Colonic mucosa (tissue), 4 donors: ENCODE measurements at regions of chr2 and their contacts with region 1.

Region 1: GRCh38 chr2:224086226-224086914 is 47.3 kb upstream of the SERPINE2 start:
- DNase-seq: no peak
- H3K4me3 ChIP-seq: no peak overlapping the region
- H3K27ac ChIP-seq: no peak overlapping the region
- H3K4me1 ChIP-seq: no peaks in the 10 kb centered on the region
- H3K27me3 ChIP-seq: no peaks in the 10 kb centered on the region
- CTCF ChIP-seq: no peak

Region 2: DNA sequence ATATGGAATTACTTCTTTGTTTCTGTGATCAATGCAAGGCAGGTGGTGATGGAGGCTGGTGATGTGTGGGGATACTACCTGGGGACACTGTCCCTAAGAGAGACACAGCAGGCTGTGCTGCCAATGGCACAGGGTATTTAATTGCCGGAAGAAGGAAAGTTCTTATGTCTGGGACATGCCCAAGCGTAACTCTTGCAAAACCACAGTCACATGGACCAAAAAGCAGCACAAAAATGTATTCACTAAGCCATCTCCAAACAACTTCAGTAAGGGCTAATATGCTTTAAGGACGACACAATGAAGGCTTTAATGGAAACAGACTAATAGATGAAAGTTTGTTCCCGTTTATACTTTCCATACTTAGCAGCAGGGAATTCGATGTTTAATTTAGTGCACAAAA is 199.2 kb before region 1 on chr2:
- intact Hi-C with region 1: no loop called
- DNase-seq: no peak
- H3K4me3 ChIP-seq: no peak overlapping the region
- H3K27ac ChIP-seq: no peak overlapping the region
- H3K4me1 ChIP-seq: no peaks in the 10 kb centered on the region
- H3K27me3 ChIP-seq: no peaks in the 10 kb centered on the region
- CTCF ChIP-seq: no peak

Region 3: GRCh38 chr2:224145751-224146355 is 59.5 kb after region 1 on chr2:
- intact Hi-C with region 1: loop called (anchors 10 kb)
- DNase-seq: peak; percentile 62
- H3K4me3 ChIP-seq: no peak overlapping the region
- H3K27ac ChIP-seq: peak overlapping the region; percentile 77
- H3K4me1 ChIP-seq: no peaks in the 10 kb centered on the region
- H3K27me3 ChIP-seq: no peaks in the 10 kb centered on the region
- CTCF ChIP-seq: no peak

Region 4: DNA sequence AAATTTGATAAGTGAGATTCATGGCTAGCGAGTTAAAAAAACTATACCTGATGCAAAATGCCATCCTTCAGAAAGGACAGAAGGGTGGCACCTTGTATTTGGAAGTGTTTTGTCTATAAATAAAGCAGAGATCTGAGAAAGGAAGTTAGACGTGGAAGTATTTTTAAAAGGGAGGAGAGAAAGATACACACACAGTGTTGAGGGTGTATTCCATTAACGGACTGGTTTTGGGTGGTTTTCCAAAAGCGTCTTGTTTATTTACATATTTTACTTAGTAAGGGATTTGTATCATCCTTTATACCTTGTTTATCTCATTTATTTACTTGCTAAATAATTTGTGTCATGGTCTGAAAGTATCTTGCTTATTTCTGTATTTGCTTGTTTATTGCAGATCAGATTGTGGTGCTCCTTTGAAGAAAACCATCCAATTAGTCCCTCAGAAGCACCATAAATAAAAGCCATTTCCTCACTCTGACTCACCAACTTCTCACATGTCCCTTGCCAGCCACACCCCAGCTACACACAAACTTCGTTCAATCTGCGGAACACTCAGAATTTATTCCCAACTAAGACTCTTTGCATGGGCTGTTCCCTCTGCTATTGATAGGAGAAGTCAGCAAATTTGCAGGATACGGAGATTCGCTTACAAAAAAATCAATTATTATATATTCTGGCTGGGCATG is 224.7 kb after region 1 on chr2:
- intact Hi-C with region 1: no loop called
- DNase-seq: no peak
- H3K4me3 ChIP-seq: no peak overlapping the region
- H3K27ac ChIP-seq: no peak overlapping the region
- H3K4me1 ChIP-seq: no peaks in the 10 kb centered on the region
- H3K27me3 ChIP-seq: no peaks in the 10 kb centered on the region
- CTCF ChIP-seq: no peak